ENCODE measurements at regions of chr4 and their contacts with region 1.

Region 1: DNA sequence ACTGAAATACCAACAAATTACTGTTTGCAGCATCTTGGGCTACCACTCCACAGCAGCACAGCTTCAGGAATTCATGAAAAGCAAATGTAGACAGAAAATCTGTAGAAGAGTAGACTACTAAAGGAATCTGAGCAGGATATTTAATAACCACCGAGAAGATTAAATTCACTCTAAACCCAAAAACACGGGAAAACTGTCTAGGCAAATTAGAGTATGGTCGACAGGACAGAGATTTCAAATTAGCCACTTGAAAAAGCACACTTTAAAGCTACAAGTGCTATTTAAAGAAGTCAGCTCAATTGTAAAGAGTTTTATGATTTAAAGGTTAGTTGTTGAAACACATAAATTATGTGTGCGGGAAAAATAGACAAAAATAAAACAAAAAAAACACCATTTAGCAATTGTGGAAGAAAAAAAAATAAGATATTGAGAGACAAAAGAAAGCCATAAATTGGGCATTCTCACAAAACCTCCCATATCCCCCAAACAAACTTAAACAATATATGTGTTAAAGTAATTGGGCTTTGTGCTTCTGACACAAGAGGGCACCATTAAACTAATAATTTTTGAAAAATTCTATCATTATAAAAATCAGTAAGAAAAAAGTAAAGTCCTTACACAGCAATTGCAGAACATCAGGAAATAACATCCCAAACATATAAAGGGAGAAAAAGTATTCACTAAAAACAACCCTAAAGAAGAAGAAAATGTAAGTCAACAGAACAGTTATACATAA is 880.8 kb downstream of the TECRL start:
- DNase-seq: peak; percentile 48
- ATAC-seq: no peak
- H3K4me3 ChIP-seq: no peak overlapping the region
- H3K27ac ChIP-seq: no peak overlapping the region
- H3K4me1 ChIP-seq: no peaks in the 10 kb centered on the region
- H3K27me3 ChIP-seq: no peaks in the 10 kb centered on the region
- CTCF ChIP-seq: peak; percentile 64

Region 2: GRCh38 chr4:63296773-63297172 is 231.7 kb before region 1 on chr4:
- CTCF ChIA-PET with region 1: no interaction called
- POLR2A ChIA-PET with region 1: no interaction called
- intact Hi-C with region 1: loop called (anchors 2 kb)
- DNase-seq: peak; percentile 49
- ATAC-seq: peak; percentile 50
- H3K4me3 ChIP-seq: no peak overlapping the region
- H3K27ac ChIP-seq: no peak overlapping the region
- H3K4me1 ChIP-seq: no peaks in the 10 kb centered on the region
- H3K27me3 ChIP-seq: no peaks in the 10 kb centered on the region
- CTCF ChIP-seq: peak; percentile 62

Region 3: GRCh38 chr4:63492515-63492914 is 35.9 kb before region 1 on chr4:
- CTCF ChIA-PET with region 1: no interaction called
- POLR2A ChIA-PET with region 1: no interaction called
- intact Hi-C with region 1: no loop called
- DNase-seq: no peak
- ATAC-seq: no peak
- H3K4me3 ChIP-seq: no peak overlapping the region
- H3K27ac ChIP-seq: no peak overlapping the region
- H3K4me1 ChIP-seq: no peaks in the 10 kb centered on the region
- H3K27me3 ChIP-seq: no peaks in the 10 kb centered on the region
- CTCF ChIP-seq: no peak

Region 4: DNA sequence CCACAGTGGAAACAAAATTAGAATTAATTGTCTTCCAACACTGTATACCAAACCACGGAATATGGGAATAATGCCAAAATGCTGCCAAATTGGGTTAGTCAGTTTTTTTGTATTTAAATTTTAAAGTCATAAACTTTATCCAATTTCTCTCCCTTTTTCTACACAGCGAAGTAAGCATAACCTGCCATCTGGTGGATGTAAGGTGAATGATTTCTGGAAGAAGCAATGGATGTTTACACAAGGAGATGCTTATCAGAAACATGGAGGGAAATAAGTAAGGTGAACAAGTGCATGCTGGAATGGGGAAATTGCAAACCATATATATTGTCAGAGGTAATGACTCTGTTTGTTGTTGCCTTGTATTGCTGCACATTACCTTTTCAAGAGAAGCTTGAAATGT is 189.0 kb after region 1 on chr4:
- CTCF ChIA-PET with region 1: no interaction called
- POLR2A ChIA-PET with region 1: no interaction called
- intact Hi-C with region 1: loop called (anchors 1 kb)
- DNase-seq: peak; percentile 82
- ATAC-seq: peak; percentile 70
- H3K4me3 ChIP-seq: no peak overlapping the region
- H3K27ac ChIP-seq: no peak overlapping the region
- H3K4me1 ChIP-seq: no peaks in the 10 kb centered on the region
- H3K27me3 ChIP-seq: no peaks in the 10 kb centered on the region
- CTCF ChIP-seq: peak; percentile 85

Region 5: DNA sequence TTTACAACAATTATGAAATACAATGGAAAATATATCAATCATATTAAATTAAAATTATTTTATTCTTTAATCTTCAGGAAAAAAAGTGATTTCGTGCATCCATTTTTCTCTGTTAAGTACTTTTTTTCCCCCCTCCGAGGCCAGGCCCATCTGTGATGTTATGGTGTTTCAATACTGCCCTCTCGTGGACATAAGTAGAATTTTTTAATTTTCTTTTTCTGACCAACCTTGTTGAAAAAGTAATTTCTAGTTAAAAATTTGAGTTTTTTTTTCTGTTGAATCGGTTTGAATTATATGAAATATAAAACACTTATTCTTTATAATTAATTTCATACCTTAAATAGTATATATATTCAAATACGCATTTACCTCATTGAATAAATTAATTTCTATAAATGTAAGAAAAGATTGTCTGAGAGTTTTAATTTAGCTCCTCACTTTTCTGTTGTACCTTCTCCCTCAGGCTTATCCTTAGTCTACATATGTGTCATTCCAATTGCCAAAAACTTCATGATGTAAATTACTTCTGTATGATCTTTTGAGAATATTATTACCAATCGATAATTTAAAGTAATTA is 1056.6 kb after region 1 on chr4:
- CTCF ChIA-PET with region 1: no interaction called
- POLR2A ChIA-PET with region 1: no interaction called
- intact Hi-C with region 1: loop called (anchors 1 kb)
- DNase-seq: peak; percentile 57
- ATAC-seq: no peak
- H3K4me3 ChIP-seq: no peak overlapping the region
- H3K27ac ChIP-seq: no peak overlapping the region
- H3K4me1 ChIP-seq: no peaks in the 10 kb centered on the region
- H3K27me3 ChIP-seq: no peaks in the 10 kb centered on the region
- CTCF ChIP-seq: peak; percentile 62

Measured in PC-3 (cell line).